HepG2 (cell line): ENCODE measurements at regions of chr1 and their contacts with region 1.

Region 1: GRCh38 chr1:30801771-30802198 is 44.2 kb upstream of the LAPTM5 start:
- DNase-seq: peak; percentile 37
- ATAC-seq: peak; percentile 70
- H3K4me3 ChIP-seq: peak overlapping the region in 1 of 3 experiments; percentile 18; a peak in 1 of 6 replicates
- H3K27ac ChIP-seq: no peak overlapping the region
- H3K4me1 ChIP-seq: peaks cover 18% of the 10 kb centered on the region
- H3K27me3 ChIP-seq: peaks cover 8 to 39% of the 10 kb centered on the region in 2 experiments
- CTCF ChIP-seq: peak; percentile 96
- EP300 ChIP-seq: no peak
- POLR2A ChIP-seq: no peak
- RAD21 ChIP-seq: peak; percentile 87

Region 2: DNA sequence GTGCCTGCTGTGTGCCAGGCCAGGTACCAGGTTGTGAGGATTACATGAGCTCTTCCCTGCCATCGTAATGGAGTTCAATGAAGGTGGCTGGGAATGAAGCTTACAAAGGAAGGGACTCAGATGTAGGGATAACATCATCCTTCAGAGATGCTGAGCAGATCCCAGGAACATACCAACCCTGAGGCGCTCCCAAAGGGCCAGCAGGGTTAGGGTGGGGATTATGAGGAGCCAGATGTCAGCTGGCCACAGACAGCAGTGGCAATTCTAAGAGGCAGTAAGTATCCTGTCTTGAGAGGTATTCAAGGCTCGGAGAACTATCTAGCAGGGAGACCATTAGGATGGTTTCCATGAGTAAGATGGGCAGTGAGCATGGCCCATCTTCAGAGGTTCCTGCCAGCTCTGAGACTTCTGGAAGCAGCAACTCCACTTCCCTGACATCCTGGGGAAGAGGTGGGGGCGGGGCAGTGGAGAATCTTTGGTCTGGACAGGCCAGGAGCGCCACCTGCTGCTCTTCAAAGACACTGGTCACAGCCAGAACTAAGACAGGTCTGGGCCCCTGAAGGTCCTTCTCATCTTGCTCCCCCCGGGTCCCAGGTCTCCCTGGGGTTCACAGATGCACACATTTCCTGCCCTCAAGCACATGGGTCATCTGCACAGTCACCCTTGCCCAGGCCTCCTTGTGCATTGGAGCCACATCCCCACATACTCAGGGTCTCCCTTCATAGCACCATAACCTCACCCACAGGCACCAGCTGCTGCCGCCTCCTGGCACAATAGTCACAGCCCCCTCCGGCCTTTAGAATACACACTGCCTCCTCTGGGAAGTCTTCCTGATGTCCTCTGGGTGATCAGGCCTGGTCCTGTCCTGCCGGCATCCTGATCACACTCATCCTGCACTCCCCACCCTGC is 109.5 kb after region 1 on chr1:
- CTCF ChIA-PET with region 1: interaction called, 72 read pairs
- POLR2A ChIA-PET with region 1: no interaction called
- in situ Hi-C with region 1: loop called (anchors 5 kb)
- intact Hi-C with region 1: loop called (anchors 1 kb)
- DNase-seq: peak; percentile 54
- ATAC-seq: peak; percentile 70
- H3K4me3 ChIP-seq: no peak overlapping the region
- H3K27ac ChIP-seq: no peak overlapping the region
- H3K4me1 ChIP-seq: peaks cover 26% of the 10 kb centered on the region
- H3K27me3 ChIP-seq: peaks cover 6 to 36% of the 10 kb centered on the region in 2 experiments
- CTCF ChIP-seq: peak; percentile 91
- EP300 ChIP-seq: no peak
- POLR2A ChIP-seq: no peak
- RAD21 ChIP-seq: peak; percentile 93

Region 3: GRCh38 chr1:30929135-30929889 is 127.5 kb after region 1 on chr1:
- CTCF ChIA-PET with region 1: interaction called, 16 read pairs
- POLR2A ChIA-PET with region 1: no interaction called
- in situ Hi-C with region 1: no loop called
- intact Hi-C with region 1: loop called (anchors 1 kb)
- DNase-seq: peak; percentile 68
- ATAC-seq: peak; percentile 77
- H3K4me3 ChIP-seq: no peak overlapping the region
- H3K27ac ChIP-seq: no peak overlapping the region
- H3K4me1 ChIP-seq: peaks cover 13% of the 10 kb centered on the region
- H3K27me3 ChIP-seq: no peaks in the 10 kb centered on the region
- CTCF ChIP-seq: peak; percentile 86
- EP300 ChIP-seq: no peak
- POLR2A ChIP-seq: 0 out of 4 replicates have a peak, but pooled peaks of 1 of the 2 experiments have one; percentile 18
- RAD21 ChIP-seq: peak; percentile 56